Activated CD4-positive, alpha-beta T cell treated with anti-CD3 and anti-CD28 coated beads, Interleukin-2, amount 10 ng/mL, durations not matched to agents 24 days and 14 days (primary cell): ENCODE measurements at regions of chr15 and their contacts with region 1.

Region 1: GRCh38 chr15:68783226-68784058 is 37.3 kb downstream of the ANP32A start:
- DNase-seq: peak; percentile 88
- H3K4me3 Mint-ChIP-seq: peak overlapping the region; percentile 42
- H3K27ac Mint-ChIP-seq: peak overlapping the region; percentile 82
- H3K4me1 Mint-ChIP-seq: peaks cover 42% of the 10 kb centered on the region
- H3K27me3 Mint-ChIP-seq: no peaks in the 10 kb centered on the region

Region 2: DNA sequence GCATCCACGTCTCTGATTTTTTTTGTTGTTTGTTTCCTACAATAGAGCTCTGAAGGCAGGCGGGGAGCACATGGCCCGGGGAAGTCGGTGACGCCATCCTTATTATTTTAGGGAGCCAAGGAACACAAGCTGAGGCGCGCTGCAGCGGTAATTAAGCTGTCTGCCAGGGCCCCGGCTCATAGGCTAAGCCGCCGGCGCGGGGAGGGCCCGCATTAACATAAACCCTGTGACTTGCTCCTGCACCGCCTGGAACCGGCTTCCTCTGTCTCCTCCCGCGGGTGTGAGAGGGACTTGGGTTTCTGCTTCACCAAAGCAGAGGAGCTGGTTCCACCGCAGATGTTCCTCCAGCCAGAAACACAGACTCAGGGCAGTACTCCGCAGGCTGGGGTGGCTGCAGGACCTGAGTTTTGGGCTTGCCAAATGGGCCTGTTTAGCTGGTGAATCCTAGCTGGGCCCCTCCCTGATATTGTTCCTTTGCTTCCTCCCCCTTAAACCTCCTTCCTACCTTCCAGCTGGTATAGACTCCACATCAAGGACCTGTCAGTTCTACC is 11.9 kb after region 1 on chr15:
- intact Hi-C with region 1: loop called (anchors 1 kb)
- DNase-seq: peak; percentile 93
- H3K4me3 Mint-ChIP-seq: peak overlapping the region; percentile 73
- H3K27ac Mint-ChIP-seq: peak overlapping the region; percentile 71
- H3K4me1 Mint-ChIP-seq: peaks cover 90% of the 10 kb centered on the region
- H3K27me3 Mint-ChIP-seq: no peaks in the 10 kb centered on the region

Region 3: GRCh38 chr15:68820295-68821189 is 37.1 kb after region 1 on chr15 and contains the start of gene ANP32A:
- intact Hi-C with region 1: loop called (anchors 2 kb)
- DNase-seq: peak; percentile 99
- H3K4me3 Mint-ChIP-seq: peak within 1 kb of the TSS; percentile 93
- H3K27ac Mint-ChIP-seq: peak within 1 kb of the TSS; percentile 96
- H3K4me1 Mint-ChIP-seq: peaks cover 30% of the 10 kb centered on the region
- H3K27me3 Mint-ChIP-seq: no peaks in the 10 kb centered on the region
- total RNA-seq, gene ANP32A: 280 and 302 TPM in 2 replicates

Region 4: GRCh38 chr15:68829068-68829467 is 45.6 kb after region 1 on chr15:
- intact Hi-C with region 1: loop called (anchors 2 kb)
- DNase-seq: peak; percentile 76
- H3K4me3 Mint-ChIP-seq: no peak overlapping the region
- H3K27ac Mint-ChIP-seq: no peak overlapping the region
- H3K4me1 Mint-ChIP-seq: peaks cover 15% of the 10 kb centered on the region
- H3K27me3 Mint-ChIP-seq: peaks cover 8% of the 10 kb centered on the region

Region 5: DNA sequence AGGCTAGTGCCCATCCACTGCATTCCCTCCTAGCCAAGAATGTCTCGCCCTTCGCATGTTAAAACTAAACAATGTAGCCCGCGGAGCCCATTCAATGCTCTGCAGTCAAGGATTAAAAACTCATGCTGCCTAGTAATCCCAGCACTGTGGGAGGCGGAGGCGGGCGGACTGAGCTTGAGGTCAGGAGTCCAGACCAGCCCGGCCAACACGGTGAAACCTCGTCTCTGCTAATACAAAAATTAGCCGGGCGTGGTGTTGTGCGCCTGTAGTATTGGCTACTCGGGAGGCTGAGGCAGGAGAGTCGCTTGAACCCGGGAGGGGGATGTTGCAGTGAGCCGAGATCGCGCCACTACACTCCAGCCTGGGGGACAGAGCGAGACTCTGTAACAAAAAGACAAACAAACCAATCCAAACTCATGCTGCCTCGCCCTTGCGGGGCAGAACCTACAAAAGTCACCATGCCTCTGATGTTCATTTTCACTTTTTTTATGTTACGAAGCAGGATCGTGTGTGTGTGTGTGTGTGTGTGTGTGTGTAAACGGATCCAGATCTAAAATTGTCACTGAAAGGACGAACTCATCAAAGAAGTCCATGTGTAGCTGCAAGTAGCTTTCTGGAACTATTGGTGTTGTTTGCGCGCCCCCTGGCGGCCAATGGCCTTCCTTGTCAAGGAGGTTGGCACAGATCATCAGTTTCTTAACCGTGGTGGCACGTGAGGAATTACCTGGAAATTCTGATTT is 92.1 kb after region 1 on chr15:
- intact Hi-C with region 1: loop called (anchors 1 kb)
- DNase-seq: peak; percentile 96
- H3K4me3 Mint-ChIP-seq: peak overlapping the region; percentile 53
- H3K27ac Mint-ChIP-seq: no peak overlapping the region
- H3K4me1 Mint-ChIP-seq: peaks cover 7% of the 10 kb centered on the region
- H3K27me3 Mint-ChIP-seq: peaks cover 35% of the 10 kb centered on the region